Left cardiac atrium (tissue), 4 donors: ENCODE measurements at regions of chr15 and their contacts with region 1.

Region 1: GRCh38 chr15:96261575-96262034 is 68.9 kb upstream of the NR2F2 start:
- DNase-seq: no peak
- ATAC-seq: no peak

Region 2: DNA sequence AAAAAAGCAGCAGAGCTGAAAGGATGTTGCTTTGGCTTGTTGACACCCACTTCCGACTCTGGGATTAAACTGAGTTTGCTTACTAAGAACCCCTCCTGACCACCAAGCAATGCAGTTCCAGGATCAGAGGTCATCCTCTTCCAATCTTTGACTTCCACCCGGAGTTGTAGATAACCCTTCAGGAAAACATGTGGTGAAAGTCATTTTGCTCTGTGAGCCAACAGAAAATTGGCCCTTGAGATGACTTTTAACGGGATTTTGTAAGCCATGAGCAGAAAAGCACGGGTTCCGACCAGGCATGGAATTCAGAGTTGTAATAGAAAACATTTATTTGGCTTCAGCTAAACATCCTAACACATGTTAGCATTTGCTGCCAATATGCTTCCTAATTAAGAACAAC is 102.7 kb before region 1 on chr15:
- intact Hi-C with region 1: loop called in 1 of 2 experiments (anchors 10 kb)
- DNase-seq: no peak
- ATAC-seq: peak; percentile 63 to 75

Region 3: DNA sequence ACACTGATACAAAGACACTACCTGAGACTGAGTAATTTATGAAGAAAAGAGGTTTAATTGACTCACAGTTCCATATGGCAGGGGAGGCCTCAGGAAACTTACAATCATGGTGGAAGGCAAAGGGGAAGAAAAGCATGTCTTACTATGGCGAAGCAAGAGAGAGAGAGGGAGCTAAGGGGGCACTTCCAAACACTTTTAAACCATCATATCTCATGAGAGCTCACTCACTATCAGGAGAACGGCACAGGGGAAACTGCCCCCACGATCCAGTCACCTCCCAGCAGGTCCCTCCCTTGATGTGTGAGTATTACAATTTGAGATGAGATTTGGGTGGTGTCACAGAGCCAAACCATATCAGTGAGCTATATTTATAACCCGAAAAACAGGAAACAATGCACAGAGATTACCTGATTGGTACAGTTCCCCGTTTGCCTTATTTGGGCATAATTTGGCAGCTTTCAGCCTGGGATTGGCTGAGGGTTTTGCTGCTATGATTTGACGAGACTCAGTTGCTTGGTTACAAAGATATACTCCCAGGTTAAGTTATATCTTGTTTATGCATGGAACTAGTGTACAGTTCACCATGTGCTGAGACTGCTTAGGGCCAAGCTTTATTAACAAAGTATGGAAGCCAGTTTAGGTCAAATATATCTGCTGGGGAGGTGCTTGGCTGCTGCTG is 253.1 kb after region 1 on chr15:
- intact Hi-C with region 1: no loop called
- DNase-seq: no peak
- ATAC-seq: no peak